ENCODE measurements at regions of chr1 and their contacts with region 1.

Region 1: GRCh38 chr1:168991667-168992475 is 114.6 kb upstream of the ATP1B1 start:
- DNase-seq: peak; percentile 61
- H3K4me3 Mint-ChIP-seq: peak overlapping the region; percentile 1
- H3K27ac Mint-ChIP-seq: peak overlapping the region; percentile 86
- H3K4me1 Mint-ChIP-seq: peaks cover 17% of the 10 kb centered on the region
- H3K27me3 Mint-ChIP-seq: peaks cover 5% of the 10 kb centered on the region

Region 2: GRCh38 chr1:169012416-169012815 is 20.5 kb after region 1 on chr1:
- intact Hi-C with region 1: loop called (anchors 2 kb)
- DNase-seq: no peak
- H3K4me3 Mint-ChIP-seq: no peak overlapping the region
- H3K27ac Mint-ChIP-seq: peak overlapping the region; percentile 68
- H3K4me1 Mint-ChIP-seq: peaks cover 11% of the 10 kb centered on the region
- H3K27me3 Mint-ChIP-seq: no peaks in the 10 kb centered on the region

Region 3: GRCh38 chr1:169812131-169812530 is 820.3 kb after region 1 on chr1:
- intact Hi-C with region 1: no loop called
- DNase-seq: no peak
- H3K4me3 Mint-ChIP-seq: no peak overlapping the region
- H3K27ac Mint-ChIP-seq: no peak overlapping the region
- H3K4me1 Mint-ChIP-seq: peaks cover 7% of the 10 kb centered on the region
- H3K27me3 Mint-ChIP-seq: no peaks in the 10 kb centered on the region